Uterus (tissue), 4 donors: ENCODE measurements at regions of chr2 and their contacts with region 1.

Region 1: DNA sequence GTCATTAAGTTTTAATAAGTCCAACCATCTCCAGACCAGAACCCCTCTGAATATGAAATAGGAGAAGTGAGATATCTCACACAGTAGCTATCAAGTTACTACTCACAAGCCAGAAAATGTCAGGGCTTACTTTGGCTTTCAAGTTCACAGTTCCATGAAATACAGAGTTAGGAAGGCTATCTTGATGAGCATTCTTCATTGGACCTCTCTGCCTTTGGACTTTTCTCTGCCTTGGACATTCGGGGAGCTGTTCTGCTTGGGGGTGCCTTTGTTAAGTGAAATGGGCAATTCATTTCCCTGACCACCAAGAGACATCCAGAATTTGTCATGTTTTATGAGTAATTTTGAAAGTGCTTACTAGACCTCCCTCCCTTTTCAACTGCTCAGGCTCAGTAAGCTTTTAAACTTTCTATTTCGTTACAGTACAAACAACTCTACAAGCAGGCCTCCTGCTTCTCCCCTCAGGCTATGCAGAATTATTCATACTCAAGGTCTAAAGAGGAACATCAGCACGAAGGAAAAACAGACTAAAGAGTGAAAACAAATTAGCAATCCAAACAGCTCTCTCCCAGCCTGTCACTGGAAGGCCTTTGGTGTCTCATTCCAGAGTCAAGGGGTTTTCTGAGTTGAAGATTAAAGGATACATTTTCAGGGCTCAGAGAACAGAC is 95.3 kb downstream of the MREG start:
- DNase-seq: no peak
- H3K4me3 ChIP-seq: no peak overlapping the region
- H3K27ac ChIP-seq: peak overlapping the region; percentile 10 to 57
- H3K4me1 ChIP-seq: no peaks in the 10 kb centered on the region
- H3K27me3 ChIP-seq: no peaks in the 10 kb centered on the region
- CTCF ChIP-seq: no peak
- POLR2A ChIP-seq: no peak

Region 2: DNA sequence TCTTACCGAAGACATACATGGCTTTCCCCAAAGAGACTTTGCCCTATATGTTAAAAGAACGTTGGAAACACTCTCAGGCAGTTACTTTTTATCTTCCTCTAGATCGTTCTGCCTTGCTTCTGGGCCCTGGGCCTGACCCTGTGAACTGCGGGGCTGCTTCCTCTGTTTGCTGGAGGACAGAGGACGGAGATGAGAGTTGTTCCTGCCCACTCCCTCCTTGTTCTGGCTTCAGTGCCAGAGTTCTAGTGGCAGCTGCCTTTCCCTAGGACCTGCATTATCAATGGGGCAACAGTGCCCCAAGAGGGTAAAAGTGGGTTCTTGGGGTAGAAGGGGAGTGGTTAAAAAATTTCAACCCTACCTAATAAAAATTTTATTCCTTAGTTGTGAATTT is 475.7 kb before region 1 on chr2:
- intact Hi-C with region 1: loop called (anchors 10 kb)
- DNase-seq: no peak
- H3K4me3 ChIP-seq: no peak overlapping the region
- H3K27ac ChIP-seq: no peak overlapping the region
- H3K4me1 ChIP-seq: no peaks in the 10 kb centered on the region
- H3K27me3 ChIP-seq: no peaks in the 10 kb centered on the region
- CTCF ChIP-seq: no peak
- POLR2A ChIP-seq: no peak

Region 3: DNA sequence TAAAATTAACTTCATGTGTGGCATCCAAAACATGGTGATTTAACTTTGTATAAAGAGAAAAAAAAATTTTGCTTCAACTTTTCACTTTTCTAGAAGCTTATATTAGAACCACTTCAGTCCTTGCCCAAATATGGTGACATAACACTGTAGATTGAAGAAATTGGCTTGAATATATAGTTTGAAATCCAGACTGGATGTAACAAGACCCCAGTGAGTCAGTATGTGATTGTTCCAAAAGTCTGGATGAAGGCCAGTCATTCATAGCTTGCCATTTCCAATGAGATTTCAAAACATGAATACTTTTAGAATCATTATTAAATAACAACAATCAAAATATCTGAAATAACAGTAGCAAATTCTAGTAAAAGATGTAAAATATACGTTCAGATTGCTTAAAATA is 377.4 kb before region 1 on chr2:
- intact Hi-C with region 1: no loop called
- DNase-seq: no peak
- H3K4me3 ChIP-seq: no peak overlapping the region
- H3K27ac ChIP-seq: no peak overlapping the region
- H3K4me1 ChIP-seq: no peaks in the 10 kb centered on the region
- H3K27me3 ChIP-seq: no peaks in the 10 kb centered on the region
- CTCF ChIP-seq: no peak
- POLR2A ChIP-seq: no peak